ENCODE measurements at regions of chr6 and their contacts with region 1.

Region 1: DNA sequence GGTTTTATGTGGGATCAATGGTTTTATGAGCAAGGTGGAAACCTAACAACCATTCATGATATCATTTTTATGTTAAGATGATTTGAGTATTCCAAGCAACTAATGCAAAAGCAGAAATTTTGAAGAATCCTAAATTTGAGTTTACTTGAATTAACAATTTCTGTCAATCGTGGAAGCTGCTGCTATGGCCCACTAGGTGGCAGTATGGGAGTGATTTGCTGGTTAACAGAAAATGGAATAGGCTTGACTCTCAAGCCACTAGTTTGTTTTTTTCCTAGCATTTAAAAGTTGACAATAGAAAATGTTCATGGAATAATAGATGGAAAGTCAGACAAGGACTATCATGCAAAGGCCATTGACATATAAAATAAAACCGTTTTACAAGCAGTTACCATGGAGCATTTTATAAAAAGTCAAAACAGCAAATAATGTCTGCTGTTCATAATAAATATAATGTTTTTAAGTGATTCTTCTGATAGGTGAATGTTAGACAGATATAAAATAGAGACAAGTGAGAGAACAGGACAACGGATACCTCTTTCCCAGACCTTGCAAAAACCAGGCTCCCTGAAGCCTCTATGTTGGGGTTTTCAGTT is 43.0 kb upstream of the TMEM200A start:
- DNase-seq: peak in 7 of 10 donors; percentile 8 to 75 (median 49)
- H3K4me3 ChIP-seq: no peak overlapping the region
- H3K27ac ChIP-seq: no peak overlapping the region
- H3K27me3 ChIP-seq: no peaks in the 10 kb centered on the region
- CTCF ChIP-seq: peak; percentile 71 to 95 (median 87)

Region 2: GRCh38 chr6:130681028-130681427 is 358.3 kb after region 1 on chr6:
- intact Hi-C with region 1: no loop called
- DNase-seq: no peak
- H3K4me3 ChIP-seq: no peak overlapping the region
- H3K27ac ChIP-seq: peak overlapping the region in 1 of 59 donors; percentile 69
- H3K27me3 ChIP-seq: no peaks in the 10 kb centered on the region
- CTCF ChIP-seq: no peak

Region 3: DNA sequence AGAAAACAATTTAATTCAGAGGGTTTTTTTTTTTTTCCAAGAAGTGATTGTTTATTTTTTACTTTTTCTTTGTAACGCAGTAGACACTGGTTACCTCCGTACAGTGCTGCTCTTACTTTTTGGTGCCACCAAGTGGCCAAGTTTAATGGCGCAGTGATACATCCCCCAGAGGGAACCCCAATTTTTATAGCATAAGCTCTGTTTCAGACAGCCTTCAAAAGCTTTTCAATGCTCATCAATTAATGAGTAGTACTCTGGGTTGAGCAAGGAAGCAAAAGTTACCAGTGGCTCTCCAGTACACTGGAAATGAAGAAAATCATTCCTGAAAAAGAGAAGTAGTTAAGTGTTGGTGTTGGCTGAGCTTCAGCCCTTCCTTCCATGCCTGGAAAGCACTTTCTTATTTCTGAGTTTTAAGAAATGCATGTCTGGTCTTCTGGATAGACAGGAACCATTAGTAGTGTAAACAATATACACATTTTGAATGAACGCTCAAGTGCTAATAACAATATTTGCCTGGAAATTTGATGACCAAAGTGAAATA is 375.3 kb after region 1 on chr6:
- intact Hi-C with region 1: loop called (anchors 5 to 10 kb)
- DNase-seq: peak in 6 of 10 donors; percentile 10 to 51 (median 48)
- H3K4me3 ChIP-seq: peak overlapping the region in 2 of 59 donors; percentile 4 to 10
- H3K27ac ChIP-seq: no peak overlapping the region
- H3K27me3 ChIP-seq: peaks cover 0 to 4% (median 0%) of the 10 kb centered on the region in 45 donors
- CTCF ChIP-seq: peak; percentile 41 to 79 (median 64)

Region 4: GRCh38 chr6:130843575-130844320 is 521.0 kb after region 1 on chr6:
- intact Hi-C with region 1: loop called in 1 of 2 experiments (anchors 10 kb)
- DNase-seq: no peak
- H3K4me3 ChIP-seq: no peak overlapping the region
- H3K27ac ChIP-seq: peak overlapping the region in 8 of 59 donors; percentile 1 to 45 (median 18)
- H3K27me3 ChIP-seq: no peaks in the 10 kb centered on the region
- CTCF ChIP-seq: peak in 48 of 56 donors; percentile 16 to 66 (median 42)

Region 5: DNA sequence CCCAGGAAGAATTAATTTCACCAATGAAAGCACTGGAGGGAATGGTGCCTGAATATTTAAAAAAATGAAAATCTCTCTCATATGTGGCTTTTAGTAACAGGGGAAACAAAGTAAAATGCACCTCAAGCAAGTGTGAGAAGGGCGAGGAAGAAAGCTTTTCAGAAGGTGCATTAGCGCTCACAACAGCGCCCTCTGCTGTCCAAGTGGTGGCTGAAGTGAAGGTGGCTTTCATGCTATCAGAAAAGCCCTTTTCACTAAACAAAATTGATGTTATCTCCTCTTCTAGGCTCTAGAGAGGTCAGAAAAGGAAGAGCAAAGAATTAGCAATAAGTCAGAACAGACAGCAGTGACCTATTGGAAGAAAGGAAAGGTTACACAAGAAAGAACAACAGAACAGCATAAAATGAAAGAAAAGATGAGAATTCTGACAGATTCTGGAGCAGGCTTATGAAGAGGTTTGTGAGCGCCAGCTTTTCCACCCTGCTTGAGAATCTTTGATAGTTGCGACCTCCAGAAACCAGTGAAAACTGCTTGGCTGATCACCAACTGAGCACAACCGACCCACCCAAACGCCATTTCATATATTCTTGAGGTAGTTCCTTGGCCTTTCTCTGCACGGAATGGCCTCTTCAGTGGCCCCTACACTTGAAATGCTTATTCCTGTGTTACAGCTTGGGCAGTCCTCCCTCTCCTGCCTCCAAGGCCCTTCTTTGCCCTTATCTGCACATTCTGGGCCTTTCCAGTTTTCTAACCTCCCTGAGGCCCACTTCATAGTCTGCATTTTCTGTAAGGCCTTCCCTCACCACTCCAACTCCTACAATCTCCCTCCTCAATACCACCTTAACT is 549.7 kb after region 1 on chr6:
- intact Hi-C with region 1: loop called (anchors 5 kb)
- DNase-seq: peak; percentile 46 to 86 (median 78)
- H3K4me3 ChIP-seq: no peak overlapping the region
- H3K27ac ChIP-seq: peak overlapping the region in 13 of 59 donors; percentile 1 to 41 (median 17)
- H3K27me3 ChIP-seq: no peaks in the 10 kb centered on the region
- CTCF ChIP-seq: peak; percentile 70 to 95 (median 88)

Region 6: DNA sequence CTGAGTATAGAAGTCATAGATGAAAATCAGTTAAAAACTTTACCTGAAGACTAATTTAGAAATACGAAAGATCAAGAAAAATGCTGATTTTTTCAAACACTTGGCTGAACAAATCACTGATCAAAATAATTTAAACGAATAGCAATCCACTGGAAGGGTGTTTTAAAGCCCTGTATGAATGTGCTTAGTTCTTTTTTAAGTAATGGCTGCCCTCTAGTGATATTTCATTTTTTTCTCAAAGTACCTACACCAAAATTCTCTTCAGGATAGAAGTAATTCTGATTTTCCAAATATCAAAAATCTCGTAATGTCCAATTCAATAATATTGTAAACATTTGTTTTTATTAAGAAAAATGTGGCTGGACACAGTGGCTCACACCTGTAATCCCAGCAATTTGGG is 845.0 kb after region 1 on chr6:
- intact Hi-C with region 1: loop called in 1 of 2 experiments (anchors 10 kb)
- DNase-seq: no peak
- H3K4me3 ChIP-seq: no peak overlapping the region
- H3K27ac ChIP-seq: no peak overlapping the region
- H3K27me3 ChIP-seq: no peaks in the 10 kb centered on the region
- CTCF ChIP-seq: peak in 51 of 56 donors; percentile 22 to 76 (median 52)